IMR-90 (cell line): ENCODE measurements at regions of chr6 and their contacts with region 1.

Region 1: DNA sequence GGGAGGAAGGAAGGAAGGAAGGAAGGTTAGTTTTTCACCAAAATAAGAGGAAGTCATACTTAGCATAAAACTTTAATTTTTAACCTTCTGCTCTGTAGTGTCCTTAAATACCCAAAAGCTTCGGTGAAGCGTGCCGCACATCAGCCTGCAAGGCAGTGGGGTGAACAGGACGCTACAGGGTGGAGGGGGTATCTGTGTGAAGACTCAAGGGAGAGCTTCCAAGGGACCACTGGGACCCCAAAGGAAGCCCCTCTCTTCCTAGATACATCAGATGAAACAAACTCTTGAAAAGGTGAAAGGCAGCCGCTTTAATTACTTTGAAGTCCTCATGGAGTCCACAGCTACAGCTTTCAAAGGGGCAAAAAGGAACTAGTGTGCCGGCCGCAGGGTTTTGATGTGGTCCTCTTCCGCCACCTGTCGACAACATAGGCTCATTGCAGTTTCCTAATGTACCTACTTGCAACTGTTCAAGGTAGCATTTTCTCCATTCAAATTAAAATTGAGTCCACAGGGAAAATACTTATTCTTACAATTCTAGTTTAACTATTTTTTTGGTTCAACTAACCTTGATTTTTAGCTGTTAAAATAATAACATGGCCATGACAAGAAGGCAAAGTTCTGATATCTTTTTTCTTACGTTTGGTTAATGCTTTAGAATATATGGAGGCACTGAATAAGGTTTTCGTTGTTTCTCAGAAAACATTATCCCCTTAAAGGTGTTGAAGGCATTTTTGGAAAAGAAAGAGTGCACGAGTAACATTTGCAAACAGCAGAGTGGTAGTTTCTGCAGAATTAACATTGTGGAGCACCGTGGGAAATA is 135.0 kb upstream of the RIPOR2 start:
- DNase-seq: peak; percentile 81
- ATAC-seq: peak; percentile 99
- H3K4me3 ChIP-seq: no peak overlapping the region
- H3K27ac ChIP-seq: peak overlapping the region; percentile 0; the same call in 1 of the 2 replicates
- H3K4me1 ChIP-seq: peaks cover 5% of the 10 kb centered on the region
- H3K27me3 ChIP-seq: no peaks in the 10 kb centered on the region
- CTCF ChIP-seq: peak; percentile 94
- POLR2A ChIP-seq: peak; percentile 59
- RAD21 ChIP-seq: peak; percentile 98

Region 2: DNA sequence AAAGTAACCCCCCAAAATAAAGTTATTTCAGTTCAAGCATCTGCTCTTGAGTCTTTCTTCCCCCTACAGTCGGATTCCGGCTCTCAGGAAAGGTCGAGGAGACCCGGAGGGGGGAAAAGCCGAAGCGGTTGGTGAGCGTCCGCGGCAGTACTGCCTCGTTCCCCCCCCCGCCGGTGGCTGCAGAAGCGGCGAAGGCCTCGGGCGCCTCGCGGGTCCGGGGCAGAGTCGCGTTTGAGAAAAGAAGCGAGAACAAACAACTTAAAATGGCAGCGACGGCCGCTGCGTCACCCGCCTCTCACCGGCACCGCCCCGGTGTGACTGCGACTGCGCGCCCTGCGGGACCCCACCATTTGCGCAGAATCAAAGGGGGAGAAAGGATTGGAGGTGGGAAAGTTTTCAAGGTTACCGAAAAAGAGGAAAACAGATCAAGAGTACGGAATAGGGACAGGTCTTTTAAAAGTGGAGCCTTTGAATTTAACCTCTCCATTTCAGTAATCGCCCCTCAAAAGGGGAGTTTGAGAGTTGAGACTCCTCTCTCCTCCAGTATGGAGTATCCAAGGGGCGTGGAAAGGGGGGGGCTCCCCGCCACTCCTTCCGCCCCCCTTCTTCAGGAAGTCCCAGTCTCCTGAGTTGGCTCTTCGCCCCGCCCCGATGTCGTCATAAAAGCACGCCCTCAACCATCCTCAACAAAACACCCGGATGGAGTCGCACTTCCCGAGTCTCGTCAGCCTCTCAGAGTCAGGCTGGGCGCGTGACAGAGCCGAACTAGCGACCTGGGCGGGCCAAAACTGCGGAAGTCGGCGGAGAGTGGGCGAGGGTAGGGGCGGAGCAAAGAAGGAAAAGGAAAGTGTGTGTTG is 349.9 kb before region 1 on chr6:
- CTCF ChIA-PET with region 1: no interaction called
- POLR2A ChIA-PET with region 1: no interaction called
- dilution Hi-C with region 1: no loop called
- in situ Hi-C with region 1: no loop called
- intact Hi-C with region 1: loop called (anchors 5 kb)
- DNase-seq: peak; percentile 100
- ATAC-seq: peak; percentile 92
- H3K4me3 ChIP-seq: peak overlapping the region; percentile 98
- H3K27ac ChIP-seq: peak overlapping the region; percentile 98
- H3K4me1 ChIP-seq: no peaks in the 10 kb centered on the region
- H3K27me3 ChIP-seq: no peaks in the 10 kb centered on the region
- CTCF ChIP-seq: no peak
- POLR2A ChIP-seq: peak; percentile 99
- RAD21 ChIP-seq: no peak

Region 3: GRCh38 chr6:24774696-24775519 is 295.8 kb before region 1 on chr6 and contains the start of gene GMNN:
- CTCF ChIA-PET with region 1: interaction called, 3 read pairs
- POLR2A ChIA-PET with region 1: no interaction called
- dilution Hi-C with region 1: no loop called
- in situ Hi-C with region 1: no loop called
- intact Hi-C with region 1: loop called (anchors 2 kb)
- DNase-seq: peak; percentile 89
- ATAC-seq: peak; percentile 93
- H3K4me3 ChIP-seq: peak within 1 kb of the TSS; percentile 87
- H3K27ac ChIP-seq: peak within 1 kb of the TSS; percentile 83
- H3K4me1 ChIP-seq: peaks cover 8% of the 10 kb centered on the region
- H3K27me3 ChIP-seq: no peaks in the 10 kb centered on the region
- CTCF ChIP-seq: no peak
- POLR2A ChIP-seq: peak; percentile 73; the same call in 1 of the 2 replicates
- RAD21 ChIP-seq: no peak
- total RNA-seq, gene GMNN: 19.7 and 33.1 TPM in 2 replicates

Region 4: DNA sequence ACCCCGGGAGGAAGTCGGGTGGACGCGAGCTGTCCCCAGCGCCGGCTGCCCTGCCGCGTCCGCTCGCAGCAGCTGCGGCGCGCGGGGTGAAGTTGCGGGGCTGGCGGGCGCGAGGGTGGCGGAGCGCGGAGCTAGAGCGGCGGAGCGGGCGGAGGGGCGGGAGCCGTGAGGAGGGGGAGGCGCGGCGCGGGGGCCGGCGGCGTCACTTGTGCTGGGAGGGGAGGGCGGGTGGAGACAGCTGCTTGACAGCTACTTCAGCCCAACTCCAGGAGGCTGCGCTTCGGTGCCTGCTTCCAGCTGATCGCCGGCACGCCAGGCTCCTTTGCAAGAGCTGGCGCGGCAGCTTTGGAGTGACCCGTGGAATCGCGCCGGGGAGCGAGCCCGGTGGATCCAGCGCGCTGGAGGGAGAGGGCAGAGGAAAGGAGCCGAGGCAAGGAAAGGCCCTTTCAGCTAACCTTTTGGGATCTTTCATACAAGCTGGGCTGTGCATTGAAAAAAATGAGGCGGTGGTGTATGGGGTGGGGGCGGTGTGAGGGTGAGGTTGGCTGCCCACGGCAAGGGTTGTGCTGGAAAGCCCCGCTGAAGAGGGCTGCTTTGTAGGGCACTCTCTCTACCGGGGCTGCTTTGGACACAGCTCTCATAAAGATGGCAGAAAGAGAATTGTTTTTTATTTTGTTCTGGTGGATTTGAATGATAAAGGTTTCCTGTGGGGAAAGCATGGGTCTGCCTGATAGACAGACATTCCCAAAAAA is 159.6 kb before region 1 on chr6:
- CTCF ChIA-PET with region 1: no interaction called
- POLR2A ChIA-PET with region 1: no interaction called
- dilution Hi-C with region 1: no loop called
- in situ Hi-C with region 1: no loop called
- intact Hi-C with region 1: loop called (anchors 5 kb)
- DNase-seq: peak; percentile 65
- ATAC-seq: peak; percentile 76
- H3K4me3 ChIP-seq: peak overlapping the region; percentile 75
- H3K27ac ChIP-seq: peak overlapping the region; percentile 73
- H3K4me1 ChIP-seq: peaks cover 22% of the 10 kb centered on the region
- H3K27me3 ChIP-seq: peaks cover 5% of the 10 kb centered on the region
- CTCF ChIP-seq: no peak
- POLR2A ChIP-seq: no peak
- RAD21 ChIP-seq: no peak

Region 5: GRCh38 chr6:24991810-24992467 is 78.8 kb before region 1 on chr6:
- CTCF ChIA-PET with region 1: interaction called, 9 read pairs
- POLR2A ChIA-PET with region 1: no interaction called
- dilution Hi-C with region 1: no loop called
- in situ Hi-C with region 1: no loop called
- intact Hi-C with region 1: loop called (anchors 1 kb)
- DNase-seq: peak; percentile 48
- ATAC-seq: peak; percentile 74
- H3K4me3 ChIP-seq: no peak overlapping the region
- H3K27ac ChIP-seq: no peak overlapping the region
- H3K4me1 ChIP-seq: peaks cover 3% of the 10 kb centered on the region
- H3K27me3 ChIP-seq: no peaks in the 10 kb centered on the region
- CTCF ChIP-seq: peak; percentile 65
- POLR2A ChIP-seq: no peak
- RAD21 ChIP-seq: peak; percentile 69

Region 6: DNA sequence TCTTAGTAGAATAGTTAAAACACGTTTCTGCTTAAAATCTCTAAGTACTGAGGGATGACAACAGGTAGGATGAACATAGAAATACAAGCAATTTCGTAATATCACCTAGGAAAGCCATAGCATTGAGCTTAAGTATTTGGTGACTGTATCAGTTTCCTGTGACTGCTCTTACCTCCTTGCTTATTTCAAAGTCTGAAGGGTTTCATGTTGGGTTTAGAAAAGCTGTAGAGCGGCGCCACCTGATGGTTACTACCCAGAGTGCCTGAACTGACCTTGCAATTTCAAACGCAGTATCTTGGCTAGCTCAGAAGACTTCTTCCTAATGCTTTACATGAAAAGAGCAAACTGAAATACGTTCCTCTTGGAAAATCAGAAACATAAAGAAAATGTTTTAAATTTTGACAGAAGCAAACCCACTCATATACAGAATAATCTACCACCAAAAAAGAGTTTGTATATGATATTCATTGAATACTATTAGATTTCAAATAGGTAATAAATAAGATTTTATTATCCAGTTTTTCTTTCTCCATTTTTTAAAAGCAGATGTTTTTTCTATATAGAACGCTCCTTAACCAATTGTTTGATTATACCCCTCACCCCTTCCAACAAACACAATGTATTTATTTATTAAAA is 52.7 kb before region 1 on chr6:
- CTCF ChIA-PET with region 1: interaction called, 8 read pairs
- POLR2A ChIA-PET with region 1: no interaction called
- dilution Hi-C with region 1: no loop called
- in situ Hi-C with region 1: no loop called
- intact Hi-C with region 1: loop called (anchors 2 kb)
- DNase-seq: peak; percentile 65
- ATAC-seq: 0 out of 2 replicates have a peak, but pooled peaks have one; percentile 22
- H3K4me3 ChIP-seq: no peak overlapping the region
- H3K27ac ChIP-seq: no peak overlapping the region
- H3K4me1 ChIP-seq: peaks cover 12% of the 10 kb centered on the region
- H3K27me3 ChIP-seq: no peaks in the 10 kb centered on the region
- CTCF ChIP-seq: peak; percentile 67
- POLR2A ChIP-seq: no peak
- RAD21 ChIP-seq: peak; percentile 82

Region 7: GRCh38 chr6:25601800-25602673 is 531.3 kb after region 1 on chr6:
- CTCF ChIA-PET with region 1: no interaction called
- POLR2A ChIA-PET with region 1: no interaction called
- dilution Hi-C with region 1: no loop called
- in situ Hi-C with region 1: no loop called
- intact Hi-C with region 1: loop called (anchors 5 kb)
- DNase-seq: peak; percentile 67
- ATAC-seq: peak; percentile 62
- H3K4me3 ChIP-seq: no peak overlapping the region
- H3K27ac ChIP-seq: no peak overlapping the region
- H3K4me1 ChIP-seq: no peaks in the 10 kb centered on the region
- H3K27me3 ChIP-seq: no peaks in the 10 kb centered on the region
- CTCF ChIP-seq: peak; percentile 72
- POLR2A ChIP-seq: no peak
- RAD21 ChIP-seq: peak; percentile 71